Panc1 (cell line): ENCODE measurements at regions of chr17 and their contacts with region 1.

Region 1: GRCh38 chr17:48259694-48260291 is 152.2 kb downstream of the SNX11 start:
- DNase-seq: no peak
- ATAC-seq: peak; percentile 47; the same call in 1 of the 2 replicates
- H3K4me3 ChIP-seq: no peak overlapping the region
- H3K27ac ChIP-seq: peak overlapping the region; percentile 63; the same call in 1 of the 2 replicates
- H3K4me1 ChIP-seq: peaks cover 36% of the 10 kb centered on the region
- H3K27me3 ChIP-seq: no peaks in the 10 kb centered on the region
- CTCF ChIP-seq: peak; percentile 88; the same call in 1 of the 2 replicates

Region 2: GRCh38 chr17:48175692-48176470 is 83.9 kb before region 1 on chr17:
- CTCF ChIA-PET with region 1: interaction called, 3 read pairs
- POLR2A ChIA-PET with region 1: interaction called, 11 read pairs
- in situ Hi-C with region 1: no loop called
- intact Hi-C with region 1: no loop called
- DNase-seq: no peak
- ATAC-seq: no peak
- H3K4me3 ChIP-seq: no peak overlapping the region
- H3K27ac ChIP-seq: no peak overlapping the region
- H3K4me1 ChIP-seq: no peaks in the 10 kb centered on the region
- H3K27me3 ChIP-seq: peaks cover 4% of the 10 kb centered on the region
- CTCF ChIP-seq: no peak

Region 3: GRCh38 chr17:48215583-48216139 is 44.1 kb before region 1 on chr17:
- CTCF ChIA-PET with region 1: interaction called, 17 read pairs
- POLR2A ChIA-PET with region 1: interaction called, 4 read pairs
- in situ Hi-C with region 1: no loop called
- intact Hi-C with region 1: no loop called
- DNase-seq: no peak
- ATAC-seq: peak; percentile 97
- H3K4me3 ChIP-seq: no peak overlapping the region
- H3K27ac ChIP-seq: peak overlapping the region; percentile 18
- H3K4me1 ChIP-seq: no peaks in the 10 kb centered on the region
- H3K27me3 ChIP-seq: no peaks in the 10 kb centered on the region
- CTCF ChIP-seq: peak; percentile 85

Region 4: GRCh38 chr17:48307814-48308411 is 48.1 kb after region 1 on chr17:
- CTCF ChIA-PET with region 1: interaction called, 10 read pairs
- POLR2A ChIA-PET with region 1: no interaction called
- in situ Hi-C with region 1: no loop called
- intact Hi-C with region 1: no loop called
- DNase-seq: peak; percentile 36
- ATAC-seq: peak; percentile 98
- H3K4me3 ChIP-seq: no peak overlapping the region
- H3K27ac ChIP-seq: no peak overlapping the region
- H3K4me1 ChIP-seq: no peaks in the 10 kb centered on the region
- H3K27me3 ChIP-seq: no peaks in the 10 kb centered on the region; the same call in 1 of the 2 replicates
- CTCF ChIP-seq: peak; percentile 96

Region 5: DNA sequence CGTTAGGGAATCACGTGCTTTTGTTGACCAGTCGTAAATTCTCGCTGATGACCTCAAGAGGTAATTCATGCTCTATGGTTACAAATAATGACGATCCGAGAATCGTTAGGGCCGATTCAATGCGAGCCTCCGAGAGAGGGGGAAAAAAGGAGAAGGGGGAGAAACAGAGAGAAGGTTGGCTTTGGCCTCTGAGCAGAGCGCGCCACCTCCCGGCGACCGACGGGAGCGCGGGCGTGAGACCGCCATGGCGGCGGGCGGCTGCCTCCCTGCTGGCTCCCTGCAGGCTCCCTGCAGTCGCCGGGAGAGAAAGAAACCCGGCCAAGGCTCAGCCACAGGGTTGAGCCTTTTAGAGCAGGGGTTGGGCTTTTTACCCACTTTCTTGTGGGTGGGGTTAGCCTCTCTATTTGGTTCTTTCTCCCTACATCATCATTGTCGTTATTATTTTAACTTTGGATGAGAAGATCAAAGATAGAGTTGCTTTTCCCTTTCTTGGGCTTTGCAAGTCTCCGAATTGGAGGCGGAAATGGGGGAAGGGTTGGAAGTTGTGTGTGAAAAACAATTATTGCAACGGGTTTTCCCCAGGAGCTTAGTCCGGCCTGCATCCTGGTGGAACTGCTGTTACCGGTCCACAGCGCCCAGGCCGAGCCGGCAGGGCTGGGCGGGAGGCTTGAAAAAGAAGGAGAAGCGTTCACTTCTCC is 334.2 kb after region 1 on chr17:
- CTCF ChIA-PET with region 1: interaction called, 5 read pairs
- POLR2A ChIA-PET with region 1: interaction called, 11 read pairs
- in situ Hi-C with region 1: no loop called
- intact Hi-C with region 1: no loop called
- DNase-seq: no peak
- ATAC-seq: peak; percentile 51
- H3K4me3 ChIP-seq: peak overlapping the region; percentile 70 to 99
- H3K27ac ChIP-seq: peak overlapping the region; percentile 99
- H3K4me1 ChIP-seq: peaks cover 64% of the 10 kb centered on the region
- H3K27me3 ChIP-seq: no peaks in the 10 kb centered on the region
- CTCF ChIP-seq: peak; percentile 100

Region 6: GRCh38 chr17:48603959-48604769 is 344.4 kb after region 1 on chr17:
- CTCF ChIA-PET with region 1: interaction called, 6 read pairs
- POLR2A ChIA-PET with region 1: interaction called, 18 read pairs
- in situ Hi-C with region 1: no loop called
- intact Hi-C with region 1: no loop called
- DNase-seq: no peak
- ATAC-seq: peak; percentile 57
- H3K4me3 ChIP-seq: peak overlapping the region; percentile 70 to 99
- H3K27ac ChIP-seq: peak overlapping the region; percentile 99
- H3K4me1 ChIP-seq: peaks cover 57% of the 10 kb centered on the region
- H3K27me3 ChIP-seq: no peaks in the 10 kb centered on the region
- CTCF ChIP-seq: no peak

Region 7: GRCh38 chr17:48618256-48618897 is 358.6 kb after region 1 on chr17:
- CTCF ChIA-PET with region 1: interaction called, 7 read pairs
- POLR2A ChIA-PET with region 1: interaction called, 5 read pairs
- in situ Hi-C with region 1: no loop called
- intact Hi-C with region 1: loop called (anchors 5 kb)
- DNase-seq: no peak
- ATAC-seq: peak; percentile 60
- H3K4me3 ChIP-seq: peak overlapping the region; percentile 68 to 71
- H3K27ac ChIP-seq: peak overlapping the region; percentile 99
- H3K4me1 ChIP-seq: peaks cover 63% of the 10 kb centered on the region
- H3K27me3 ChIP-seq: no peaks in the 10 kb centered on the region
- CTCF ChIP-seq: peak; percentile 100

Region 8: GRCh38 chr17:48985436-48986245 is 725.8 kb after region 1 on chr17:
- CTCF ChIA-PET with region 1: no interaction called
- POLR2A ChIA-PET with region 1: no interaction called
- in situ Hi-C with region 1: no loop called
- intact Hi-C with region 1: no loop called
- DNase-seq: no peak
- ATAC-seq: peak; percentile 17; the same call in 1 of the 2 replicates
- H3K4me3 ChIP-seq: no peak overlapping the region
- H3K27ac ChIP-seq: no peak overlapping the region
- H3K4me1 ChIP-seq: peaks cover 10% of the 10 kb centered on the region
- H3K27me3 ChIP-seq: no peaks in the 10 kb centered on the region
- CTCF ChIP-seq: no peak